CD8-positive, alpha-beta T cell (primary cell): ENCODE measurements at regions of chr16 and their contacts with region 1.

Region 1: DNA sequence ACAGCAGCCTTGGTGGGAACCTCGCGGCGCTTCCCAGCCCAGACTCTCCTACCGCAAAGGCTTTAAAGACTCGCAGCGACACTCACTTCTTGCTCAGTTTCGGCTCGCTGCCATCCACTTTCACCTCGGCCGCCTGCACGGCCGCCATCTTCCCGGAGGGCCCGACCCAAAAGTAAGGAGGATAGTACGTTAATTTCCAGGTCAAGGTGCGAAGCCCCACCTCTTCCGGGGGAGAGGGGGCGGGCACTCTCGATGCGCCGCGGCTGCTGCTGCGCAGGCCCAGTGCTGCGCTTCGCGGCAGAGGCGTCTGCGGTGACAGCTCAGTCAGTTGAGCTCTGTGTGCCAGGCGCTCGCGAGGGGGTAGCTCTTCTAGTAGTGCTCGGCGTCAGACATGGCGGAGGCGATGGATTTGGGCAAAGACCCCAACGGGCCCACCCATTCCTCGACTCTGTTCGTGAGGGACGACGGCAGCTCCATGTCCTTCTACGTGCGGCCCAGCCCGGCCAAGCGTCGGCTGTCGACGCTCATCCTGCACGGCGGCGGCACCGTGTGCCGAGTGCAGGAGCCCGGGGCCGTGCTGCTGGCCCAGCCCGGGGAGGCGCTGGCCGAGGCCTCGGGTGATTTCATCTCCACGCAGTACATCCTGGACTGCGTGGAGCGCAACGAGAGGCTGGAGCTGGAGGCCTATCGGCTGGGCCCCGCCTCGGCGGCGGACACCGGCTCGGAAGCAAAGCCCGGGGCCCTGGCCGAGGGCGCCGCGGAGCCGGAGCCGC is at the starts of genes KARS1 and TERF2IP:
- DNase-seq: peak; percentile 92 to 98 (median 94)
- ATAC-seq: peak; percentile 83
- H3K4me3 ChIP-seq: peak within 1 kb of the TSS; percentile 72 to 91
- H3K4me3 Mint-ChIP-seq: peak within 1 kb of the TSS; percentile 100
- H3K27ac ChIP-seq: peak within 1 kb of the TSS; percentile 89 to 92
- H3K27ac Mint-ChIP-seq: peak within 1 kb of the TSS; percentile 96
- H3K4me1 ChIP-seq: peaks cover 52% of the 10 kb centered on the region
- H3K4me1 Mint-ChIP-seq: peaks cover 69% of the 10 kb centered on the region
- H3K27me3 ChIP-seq: no peaks in the 10 kb centered on the region
- H3K27me3 Mint-ChIP-seq: no peaks in the 10 kb centered on the region
- CTCF ChIP-seq: no peak
- total RNA-seq, gene KARS1: 162 to 168 TPM
- total RNA-seq, gene TERF2IP: 107 to 112 TPM

Region 2: DNA sequence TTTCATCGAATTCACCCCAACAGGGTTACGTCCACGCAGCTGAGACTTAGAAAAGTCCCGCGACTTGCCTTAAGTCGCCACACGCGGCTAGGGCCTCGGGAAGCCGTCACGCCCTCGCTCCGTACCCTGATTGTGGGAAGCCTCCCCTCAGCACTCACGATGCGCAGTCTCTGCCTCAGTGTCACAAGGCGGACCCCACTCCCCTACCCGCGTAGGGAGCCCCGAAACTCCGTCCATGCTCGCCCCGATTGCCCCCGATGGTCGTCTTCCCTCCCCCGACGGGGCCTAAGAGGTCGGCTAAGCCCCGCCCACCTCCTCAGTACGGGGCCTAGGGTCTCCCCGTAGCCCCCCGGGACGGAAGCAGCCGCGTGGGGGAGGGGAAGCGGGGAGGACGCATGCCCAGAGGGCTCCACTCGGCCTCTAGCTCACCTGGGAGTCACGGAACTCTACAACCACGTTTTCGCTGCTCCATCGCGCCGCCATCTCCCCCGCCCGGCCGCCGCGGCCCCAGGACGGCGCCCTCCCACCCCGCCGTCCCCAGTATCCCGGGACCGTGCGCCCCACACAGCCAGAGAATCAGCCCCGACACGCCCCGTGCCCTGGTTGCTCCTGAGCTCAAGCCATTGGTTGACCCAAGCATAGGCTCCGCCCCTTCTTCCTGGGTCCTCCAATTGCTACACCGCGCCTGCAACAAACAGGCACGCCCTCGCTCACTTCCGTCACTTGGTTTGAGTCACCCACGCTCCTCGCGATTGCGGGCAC is 663.0 kb before region 1 on chr16 and contains the start of gene WDR59:
- CTCF ChIA-PET with region 1: no interaction called
- POLR2A ChIA-PET with region 1: interaction called, 11 read pairs
- intact Hi-C with region 1: no loop called
- DNase-seq: peak; percentile 95 to 100 (median 99)
- ATAC-seq: peak; percentile 98
- H3K4me3 ChIP-seq: peak within 1 kb of the TSS; percentile 82 to 99
- H3K4me3 Mint-ChIP-seq: peak within 1 kb of the TSS; percentile 93
- H3K27ac ChIP-seq: peak within 1 kb of the TSS; percentile 66 to 67
- H3K27ac Mint-ChIP-seq: peak within 1 kb of the TSS; percentile 90
- H3K4me1 ChIP-seq: peaks cover 7% of the 10 kb centered on the region
- H3K4me1 Mint-ChIP-seq: peaks cover 23% of the 10 kb centered on the region
- H3K27me3 ChIP-seq: no peaks in the 10 kb centered on the region
- H3K27me3 Mint-ChIP-seq: no peaks in the 10 kb centered on the region
- CTCF ChIP-seq: no peak
- total RNA-seq, gene WDR59: 60.1 to 60.8 TPM

Region 3: DNA sequence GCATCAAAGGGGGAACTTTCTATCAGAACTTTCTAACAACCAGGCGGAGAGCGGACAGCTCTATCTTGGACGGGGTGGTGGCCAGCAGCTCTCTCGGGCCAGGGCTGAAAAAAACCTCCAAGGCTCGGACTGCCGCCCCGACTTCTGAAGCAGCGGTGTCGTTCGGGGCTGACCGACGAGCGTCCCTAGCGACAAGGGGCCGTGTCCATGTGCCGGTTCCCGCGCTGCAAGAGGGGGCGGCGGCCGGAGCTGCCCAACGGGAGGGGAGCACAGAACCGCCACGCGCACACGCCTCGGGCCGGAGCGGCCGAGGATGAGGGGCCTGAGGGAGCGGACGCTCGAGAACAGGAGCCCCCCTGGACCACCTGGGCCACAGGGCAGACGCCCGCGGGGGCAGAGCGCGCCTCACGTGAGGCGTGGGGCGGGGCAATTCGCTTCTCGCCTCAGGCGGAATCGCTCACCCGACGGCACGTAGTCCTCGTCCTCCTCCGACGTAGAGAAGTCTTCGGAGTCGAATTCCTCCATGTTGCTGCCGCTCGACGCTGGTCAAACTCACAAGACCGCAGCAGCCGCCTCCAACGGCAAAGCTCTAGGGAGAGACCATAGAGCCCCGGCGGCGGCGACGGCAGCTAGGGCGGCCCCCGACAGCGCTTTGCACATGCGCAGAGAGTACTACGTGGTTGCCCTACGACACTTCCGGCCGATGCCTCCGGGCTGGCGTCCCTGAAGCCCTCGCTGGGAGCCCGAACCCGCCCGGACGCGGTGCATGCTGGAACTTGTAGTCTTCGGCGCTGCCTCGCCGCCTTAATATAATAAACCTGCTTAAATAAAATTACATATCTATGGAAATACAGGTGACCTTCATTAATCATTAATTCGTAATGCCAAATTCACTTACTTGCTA is 214.6 kb before region 1 on chr16 and contains the start of gene CFDP1:
- CTCF ChIA-PET with region 1: interaction called, 5 read pairs
- POLR2A ChIA-PET with region 1: interaction called, 23 read pairs
- intact Hi-C with region 1: loop called in 1 of 2 experiments (anchors 1 kb)
- DNase-seq: peak; percentile 90 to 98 (median 96)
- ATAC-seq: peak; percentile 81
- H3K4me3 ChIP-seq: peak within 1 kb of the TSS; percentile 87 to 90
- H3K4me3 Mint-ChIP-seq: peak within 1 kb of the TSS; percentile 87
- H3K27ac ChIP-seq: peak within 1 kb of the TSS; percentile 95 to 98
- H3K27ac Mint-ChIP-seq: peak within 1 kb of the TSS; percentile 96
- H3K4me1 ChIP-seq: peaks cover 6% of the 10 kb centered on the region
- H3K4me1 Mint-ChIP-seq: peaks cover 38% of the 10 kb centered on the region
- H3K27me3 ChIP-seq: no peaks in the 10 kb centered on the region
- H3K27me3 Mint-ChIP-seq: no peaks in the 10 kb centered on the region
- CTCF ChIP-seq: no peak
- total RNA-seq, gene CFDP1: 18.6 to 20.3 TPM

Region 4: GRCh38 chr16:75555707-75556430 is 91.8 kb before region 1 on chr16 and contains the start of gene TMEM231:
- CTCF ChIA-PET with region 1: no interaction called
- POLR2A ChIA-PET with region 1: interaction called, 18 read pairs
- intact Hi-C with region 1: loop called (anchors 1 to 2 kb)
- DNase-seq: peak; percentile 95 to 98 (median 97)
- ATAC-seq: peak; percentile 96
- H3K4me3 ChIP-seq: peak within 1 kb of the TSS; percentile 61 to 69
- H3K4me3 Mint-ChIP-seq: peak within 1 kb of the TSS; percentile 86
- H3K27ac ChIP-seq: peak within 1 kb of the TSS; percentile 65 to 70
- H3K27ac Mint-ChIP-seq: peak within 1 kb of the TSS; percentile 88
- H3K4me1 ChIP-seq: peaks cover 12% of the 10 kb centered on the region
- H3K4me1 Mint-ChIP-seq: peaks cover 14% of the 10 kb centered on the region
- H3K27me3 ChIP-seq: no peaks in the 10 kb centered on the region
- H3K27me3 Mint-ChIP-seq: peaks cover 9% of the 10 kb centered on the region
- CTCF ChIP-seq: no peak
- total RNA-seq, gene TMEM231: 2.1 to 2.8 TPM

Region 5: DNA sequence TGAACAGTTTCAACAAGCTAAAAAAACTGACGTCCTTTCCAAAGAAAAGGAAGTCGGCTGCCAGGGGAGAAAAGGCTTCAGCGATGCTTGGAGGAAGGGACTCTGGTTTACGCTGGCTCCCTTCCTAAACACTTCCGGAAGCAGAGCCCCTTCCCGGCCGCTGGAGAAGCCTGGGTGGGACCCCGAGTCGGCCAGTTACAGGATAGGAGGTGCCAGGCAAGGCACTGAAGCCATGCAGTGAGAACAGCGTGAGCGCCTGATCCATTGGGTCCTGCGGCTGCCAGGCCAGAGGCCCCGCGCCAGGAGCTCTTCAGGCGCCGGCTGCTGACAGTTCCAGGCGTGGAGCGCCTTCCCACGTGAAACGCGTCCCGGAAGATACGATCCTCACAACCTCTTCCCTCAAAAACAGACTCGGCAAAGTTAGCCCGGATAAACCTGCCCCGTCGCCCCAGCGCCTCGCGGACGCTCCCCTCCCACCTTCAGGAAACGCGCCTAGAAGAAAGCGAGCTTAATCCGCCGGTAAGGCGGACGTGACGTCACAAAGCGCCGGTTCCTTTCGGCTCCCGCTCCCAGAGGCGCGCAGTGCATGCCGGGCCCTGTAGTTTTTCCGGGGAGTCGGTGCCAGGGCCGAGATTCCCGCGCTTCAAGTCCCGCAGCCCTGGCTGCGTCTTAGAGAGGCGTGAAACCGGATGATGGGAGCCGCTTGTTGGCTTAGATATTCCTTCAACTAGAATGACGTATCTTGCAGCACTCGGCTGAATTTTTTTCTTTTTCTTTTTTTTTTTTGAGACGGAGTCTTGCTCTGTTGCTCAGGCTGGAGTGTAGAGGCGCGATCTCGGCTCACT is 24.7 kb before region 1 on chr16 and contains the start of gene ADAT1:
- CTCF ChIA-PET with region 1: interaction called, 18 read pairs
- POLR2A ChIA-PET with region 1: interaction called, 109 read pairs
- intact Hi-C with region 1: loop called (anchors 1 kb)
- DNase-seq: peak; percentile 94 to 100 (median 98)
- ATAC-seq: peak; percentile 85
- H3K4me3 ChIP-seq: peak within 1 kb of the TSS; percentile 90 to 97
- H3K4me3 Mint-ChIP-seq: peak within 1 kb of the TSS; percentile 98
- H3K27ac ChIP-seq: peak within 1 kb of the TSS; percentile 89 to 98
- H3K27ac Mint-ChIP-seq: peak within 1 kb of the TSS; percentile 98
- H3K4me1 ChIP-seq: peaks cover 36% of the 10 kb centered on the region
- H3K4me1 Mint-ChIP-seq: peaks cover 58% of the 10 kb centered on the region
- H3K27me3 ChIP-seq: no peaks in the 10 kb centered on the region
- H3K27me3 Mint-ChIP-seq: no peaks in the 10 kb centered on the region
- CTCF ChIP-seq: no peak
- total RNA-seq, gene ADAT1: 44.4 to 47.6 TPM

Region 6: GRCh38 chr16:75764154-75764768 is 116.6 kb after region 1 on chr16:
- CTCF ChIA-PET with region 1: interaction called, 7 read pairs
- POLR2A ChIA-PET with region 1: interaction called, 8 read pairs
- intact Hi-C with region 1: loop called in 1 of 2 experiments (anchors 1 kb)
- DNase-seq: peak; percentile 24 to 83 (median 53)
- ATAC-seq: peak; percentile 99
- H3K4me3 ChIP-seq: no peak overlapping the region
- H3K4me3 Mint-ChIP-seq: no peak overlapping the region
- H3K27ac ChIP-seq: no peak overlapping the region
- H3K27ac Mint-ChIP-seq: no peak overlapping the region
- H3K4me1 ChIP-seq: no peaks in the 10 kb centered on the region
- H3K4me1 Mint-ChIP-seq: no peaks in the 10 kb centered on the region
- H3K27me3 ChIP-seq: no peaks in the 10 kb centered on the region
- H3K27me3 Mint-ChIP-seq: peaks cover 2% of the 10 kb centered on the region
- CTCF ChIP-seq: peak; percentile 83

Region 7: DNA sequence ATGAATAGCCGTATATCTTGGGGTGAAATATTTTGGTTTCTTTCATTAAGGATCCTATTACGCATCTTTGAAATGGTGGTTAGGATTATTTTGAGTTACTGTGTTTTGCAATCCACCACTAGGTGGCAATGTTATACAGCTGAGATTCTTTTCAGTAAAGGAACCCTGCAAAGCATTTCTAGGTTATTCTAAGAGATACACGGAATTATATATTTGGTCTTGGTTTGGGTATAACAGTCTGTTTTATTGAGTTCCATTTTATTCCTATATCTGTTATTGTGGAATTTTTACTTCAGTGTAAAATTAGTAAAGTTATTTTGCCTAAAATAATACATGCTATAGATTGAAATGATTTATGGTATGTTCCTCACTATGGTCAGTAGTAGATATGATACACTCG is 141.6 kb after region 1 on chr16:
- CTCF ChIA-PET with region 1: no interaction called
- POLR2A ChIA-PET with region 1: no interaction called
- intact Hi-C with region 1: no loop called
- DNase-seq: peak in 2 of 9 experiments; percentile 47 to 63
- ATAC-seq: no peak
- H3K4me3 ChIP-seq: no peak overlapping the region
- H3K4me3 Mint-ChIP-seq: no peak overlapping the region
- H3K27ac ChIP-seq: no peak overlapping the region
- H3K27ac Mint-ChIP-seq: no peak overlapping the region
- H3K4me1 ChIP-seq: no peaks in the 10 kb centered on the region
- H3K4me1 Mint-ChIP-seq: no peaks in the 10 kb centered on the region
- H3K27me3 ChIP-seq: no peaks in the 10 kb centered on the region
- H3K27me3 Mint-ChIP-seq: peaks cover 21% of the 10 kb centered on the region
- CTCF ChIP-seq: peak; percentile 92